PC-9 (cell line): ENCODE measurements at regions of chr15 and their contacts with region 1.

Region 1: GRCh38 chr15:58749532-58750337 is at the start of gene ADAM10:
- DNase-seq: peak; percentile 89 to 98
- H3K4me3 ChIP-seq: peak within 1 kb of the TSS; percentile 97
- H3K27ac ChIP-seq: peak within 1 kb of the TSS; percentile 79
- H3K4me1 ChIP-seq: peaks cover 20% of the 10 kb centered on the region
- H3K27me3 ChIP-seq: no peaks in the 10 kb centered on the region
- CTCF ChIP-seq: no peak
- total RNA-seq, gene ADAM10: 160 and 239 TPM in 2 replicates

Region 2: DNA sequence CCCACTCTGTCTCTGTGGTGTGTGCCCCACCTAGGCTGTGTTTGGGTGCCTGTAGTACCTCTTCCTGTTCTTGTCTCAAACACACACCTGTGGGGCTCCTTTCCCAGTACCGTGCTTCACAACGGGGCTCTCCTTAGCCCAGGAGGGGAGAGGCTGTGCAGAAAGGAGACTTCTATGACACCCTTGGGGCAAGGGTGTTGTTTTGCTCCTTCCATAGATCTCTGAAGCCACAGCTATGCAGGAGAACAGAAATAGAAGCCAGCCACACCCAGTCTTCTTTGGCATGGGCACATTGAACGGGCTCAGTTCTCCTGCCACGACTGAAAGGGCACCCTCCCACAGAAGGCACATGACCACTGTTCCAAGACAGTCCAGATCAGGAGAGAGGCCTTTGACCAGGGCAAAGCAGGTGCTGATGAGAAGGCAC is 243.7 kb before region 1 on chr15:
- CTCF ChIA-PET with region 1: no interaction called
- POLR2A ChIA-PET with region 1: interaction called, 21 read pairs
- intact Hi-C with region 1: no loop called
- DNase-seq: peak; percentile 43 to 75
- H3K4me3 ChIP-seq: no peak overlapping the region
- H3K27ac ChIP-seq: 0 out of 2 replicates have a peak overlapping the region, but pooled peaks have one; percentile 40
- H3K4me1 ChIP-seq: peaks cover 17% of the 10 kb centered on the region
- H3K27me3 ChIP-seq: no peaks in the 10 kb centered on the region
- CTCF ChIP-seq: no peak

Region 3: DNA sequence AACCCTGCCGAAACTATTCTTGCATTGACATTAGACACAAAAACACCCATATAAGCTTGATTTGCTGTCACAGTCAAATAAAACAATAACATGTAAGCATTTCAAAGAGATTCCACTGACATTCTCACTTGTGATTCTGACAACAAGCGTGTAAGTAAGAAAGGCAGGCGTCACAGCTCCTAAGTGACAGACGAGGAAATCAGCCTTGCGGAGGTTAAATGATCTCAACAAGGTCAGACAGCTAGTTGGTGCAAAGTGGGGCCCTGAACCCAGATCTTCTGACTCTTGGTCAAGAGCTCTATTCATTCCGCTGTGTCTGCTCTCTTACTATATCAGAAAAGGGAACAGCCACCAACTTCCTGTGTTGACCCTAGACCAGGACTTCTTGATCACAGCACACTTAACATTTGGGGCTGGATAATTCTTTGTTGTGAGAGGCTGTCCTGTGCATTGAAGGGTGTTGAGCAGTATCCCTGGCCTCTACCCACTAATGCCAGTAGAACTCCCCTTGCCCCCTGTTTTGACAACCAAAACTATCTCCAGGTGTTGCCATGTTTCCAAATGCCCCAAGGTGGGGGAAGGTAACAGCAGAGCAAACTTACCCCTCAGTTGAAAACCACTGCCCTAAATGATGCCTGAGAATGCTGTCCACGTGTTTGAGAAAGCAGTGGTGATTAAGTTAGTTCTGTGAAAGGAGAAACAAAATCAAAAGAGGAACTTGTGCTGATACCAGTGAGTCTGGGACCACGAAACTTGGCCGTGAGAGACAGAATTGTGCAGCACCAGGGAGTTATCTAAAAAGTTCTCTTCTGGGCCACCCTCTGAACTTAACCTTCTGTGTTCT is 231.8 kb before region 1 on chr15:
- CTCF ChIA-PET with region 1: no interaction called
- POLR2A ChIA-PET with region 1: no interaction called
- intact Hi-C with region 1: no loop called
- DNase-seq: no peak
- H3K4me3 ChIP-seq: no peak overlapping the region
- H3K27ac ChIP-seq: no peak overlapping the region
- H3K4me1 ChIP-seq: peaks cover 26% of the 10 kb centered on the region
- H3K27me3 ChIP-seq: no peaks in the 10 kb centered on the region
- CTCF ChIP-seq: no peak

Region 4: GRCh38 chr15:58632789-58633188 is 116.9 kb before region 1 on chr15:
- CTCF ChIA-PET with region 1: no interaction called
- POLR2A ChIA-PET with region 1: interaction called, 18 read pairs
- intact Hi-C with region 1: no loop called
- DNase-seq: no peak
- H3K4me3 ChIP-seq: no peak overlapping the region
- H3K27ac ChIP-seq: no peak overlapping the region
- H3K4me1 ChIP-seq: no peaks in the 10 kb centered on the region
- H3K27me3 ChIP-seq: no peaks in the 10 kb centered on the region
- CTCF ChIP-seq: no peak

Region 5: DNA sequence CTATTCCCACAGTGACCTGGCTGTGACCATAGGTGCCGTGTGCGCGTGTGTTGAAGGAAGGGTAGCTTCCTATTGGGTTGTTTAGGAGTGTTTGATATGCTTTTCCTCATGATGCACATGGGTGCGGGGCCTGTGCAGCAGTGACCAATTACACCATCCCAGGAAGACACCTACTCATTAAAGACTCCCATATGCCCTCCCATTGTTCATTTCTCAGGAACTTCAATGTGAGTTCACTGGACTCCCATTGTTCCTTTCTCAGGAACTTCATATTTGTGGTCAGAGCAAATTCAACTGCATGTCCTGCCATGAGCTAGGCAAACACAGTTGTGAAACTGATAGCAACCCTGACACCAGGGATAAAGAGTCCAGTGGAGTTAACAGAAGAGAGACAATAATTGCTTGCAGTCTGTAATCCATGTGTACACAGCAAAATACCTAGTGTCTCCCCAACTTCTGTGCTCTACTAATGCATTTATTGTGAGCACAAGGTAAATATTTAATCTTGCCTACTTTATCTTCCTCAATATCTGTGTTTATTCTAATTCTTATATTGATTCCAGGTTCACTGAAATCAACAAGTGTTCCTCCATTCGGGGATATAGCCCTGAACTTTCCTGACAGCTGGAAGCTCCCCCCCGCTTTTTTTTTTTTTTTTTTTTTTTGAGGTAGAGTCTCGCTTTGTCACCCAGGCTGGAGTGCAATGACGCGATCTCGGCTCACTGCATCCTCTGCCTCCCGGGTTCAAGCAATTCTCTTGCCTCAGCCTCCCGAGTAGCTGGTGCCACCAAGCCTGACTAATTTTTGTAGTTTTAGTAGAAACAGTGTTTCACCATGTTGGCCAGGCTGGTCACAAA is 804.4 kb after region 1 on chr15:
- CTCF ChIA-PET with region 1: no interaction called
- POLR2A ChIA-PET with region 1: no interaction called
- intact Hi-C with region 1: no loop called
- DNase-seq: peak; percentile 49 to 90
- H3K4me3 ChIP-seq: no peak overlapping the region
- H3K27ac ChIP-seq: peak overlapping the region; percentile 53
- H3K4me1 ChIP-seq: peaks cover 53% of the 10 kb centered on the region
- H3K27me3 ChIP-seq: no peaks in the 10 kb centered on the region
- CTCF ChIP-seq: no peak